GM18951 (cell line): ENCODE measurements at regions of chr1 and their contacts with region 1.

Region 1: GRCh38 chr1:63691701-63692425 is 82.0 kb upstream of the ROR1 start:
- POLR2A ChIP-seq: no peak

Region 2: DNA sequence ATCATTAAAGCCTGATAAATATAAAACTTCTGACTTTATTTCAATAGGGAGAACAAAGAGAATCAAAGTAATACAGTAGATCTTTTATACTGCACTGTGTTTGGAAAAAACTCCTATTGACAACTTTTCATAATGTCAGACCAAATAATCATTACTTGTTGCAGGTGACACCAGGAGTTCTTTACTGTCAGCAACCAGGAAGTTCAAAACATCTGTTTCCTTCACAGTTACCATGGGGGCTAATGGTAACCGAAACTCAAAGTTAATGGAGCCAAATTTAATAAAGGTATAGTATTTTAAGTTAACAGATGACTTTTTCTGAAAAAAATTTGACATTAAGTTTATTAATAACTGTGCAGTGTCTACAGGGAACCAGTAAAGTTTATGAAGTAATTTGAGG is 157.9 kb before region 1 on chr1:
- in situ Hi-C with region 1: no loop called
- POLR2A ChIP-seq: no peak

Region 3: DNA sequence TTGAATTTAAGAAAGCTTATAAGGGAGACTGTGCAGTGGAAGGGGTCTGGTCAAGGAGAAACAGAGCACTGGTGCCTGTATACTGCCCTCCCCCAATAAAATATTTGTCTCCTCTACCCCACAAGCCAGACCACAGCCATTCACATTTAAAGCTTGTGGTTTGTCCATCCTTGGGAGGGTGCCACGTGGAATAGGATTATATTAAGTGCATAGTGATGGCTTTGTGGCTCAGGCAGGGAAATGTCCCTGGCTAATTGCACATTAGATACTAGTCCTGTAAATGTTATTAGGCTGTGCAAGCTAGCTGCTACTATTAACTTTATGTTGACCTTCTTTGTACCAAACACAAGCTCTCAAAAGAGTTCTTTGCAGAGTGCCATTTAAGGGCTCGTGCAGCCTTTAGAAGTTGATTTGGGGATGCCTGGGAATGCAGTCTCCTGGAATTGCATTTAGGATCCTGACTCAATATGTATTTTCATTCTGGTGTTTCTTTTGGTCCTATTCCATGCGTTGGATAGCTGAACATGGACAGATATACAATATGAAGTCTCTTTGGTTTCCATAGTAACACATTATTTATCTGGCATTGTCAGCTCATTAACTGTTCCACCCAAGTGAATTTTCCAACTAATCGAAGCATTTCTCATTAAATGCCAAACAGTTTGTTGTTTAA is 292.5 kb after region 1 on chr1:
- in situ Hi-C with region 1: no loop called
- POLR2A ChIP-seq: no peak

Region 4: GRCh38 chr1:64136752-64137411 is 445.0 kb after region 1 on chr1:
- in situ Hi-C with region 1: loop called (anchors 25 kb)
- POLR2A ChIP-seq: no peak

Region 5: DNA sequence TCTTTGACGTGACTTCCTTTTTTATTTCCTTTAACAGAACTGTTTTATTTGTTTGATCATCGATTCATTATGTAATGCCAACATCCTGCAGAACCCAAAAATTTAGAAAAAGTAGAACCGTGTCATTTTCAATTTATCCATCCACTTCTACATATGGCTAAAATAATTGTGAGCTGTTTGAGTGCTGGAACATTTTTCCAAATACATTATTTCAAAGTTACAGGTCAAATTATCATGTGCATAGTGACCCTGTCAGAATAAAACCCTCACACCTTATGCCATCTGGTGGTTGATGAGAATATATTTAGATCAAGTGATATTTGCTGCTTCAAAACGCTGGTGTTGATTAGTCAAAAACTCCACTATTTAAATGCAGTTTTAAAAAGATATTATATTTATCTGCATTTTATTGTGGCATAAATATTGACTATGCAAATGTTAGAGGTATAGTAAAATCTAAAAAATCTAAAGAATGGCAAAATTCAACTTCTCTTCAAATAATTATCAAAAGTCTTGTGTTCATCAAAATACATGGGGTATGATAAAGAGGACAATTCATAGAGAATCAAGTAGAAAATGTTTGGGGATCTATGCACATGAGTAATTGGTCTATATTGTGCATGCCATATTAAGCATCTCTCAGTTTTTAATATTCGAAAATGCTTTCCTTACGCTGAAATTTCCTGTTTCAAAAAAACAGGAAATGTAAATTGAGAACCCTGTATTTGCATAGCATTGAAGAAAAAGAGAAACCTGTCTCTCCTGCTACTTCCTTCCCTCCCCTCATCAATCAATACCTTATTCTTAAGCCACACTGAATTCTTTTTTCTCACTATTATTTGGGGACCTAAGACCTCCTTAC is 551.3 kb after region 1 on chr1:
- in situ Hi-C with region 1: loop called (anchors 25 kb)
- POLR2A ChIP-seq: no peak

Region 6: DNA sequence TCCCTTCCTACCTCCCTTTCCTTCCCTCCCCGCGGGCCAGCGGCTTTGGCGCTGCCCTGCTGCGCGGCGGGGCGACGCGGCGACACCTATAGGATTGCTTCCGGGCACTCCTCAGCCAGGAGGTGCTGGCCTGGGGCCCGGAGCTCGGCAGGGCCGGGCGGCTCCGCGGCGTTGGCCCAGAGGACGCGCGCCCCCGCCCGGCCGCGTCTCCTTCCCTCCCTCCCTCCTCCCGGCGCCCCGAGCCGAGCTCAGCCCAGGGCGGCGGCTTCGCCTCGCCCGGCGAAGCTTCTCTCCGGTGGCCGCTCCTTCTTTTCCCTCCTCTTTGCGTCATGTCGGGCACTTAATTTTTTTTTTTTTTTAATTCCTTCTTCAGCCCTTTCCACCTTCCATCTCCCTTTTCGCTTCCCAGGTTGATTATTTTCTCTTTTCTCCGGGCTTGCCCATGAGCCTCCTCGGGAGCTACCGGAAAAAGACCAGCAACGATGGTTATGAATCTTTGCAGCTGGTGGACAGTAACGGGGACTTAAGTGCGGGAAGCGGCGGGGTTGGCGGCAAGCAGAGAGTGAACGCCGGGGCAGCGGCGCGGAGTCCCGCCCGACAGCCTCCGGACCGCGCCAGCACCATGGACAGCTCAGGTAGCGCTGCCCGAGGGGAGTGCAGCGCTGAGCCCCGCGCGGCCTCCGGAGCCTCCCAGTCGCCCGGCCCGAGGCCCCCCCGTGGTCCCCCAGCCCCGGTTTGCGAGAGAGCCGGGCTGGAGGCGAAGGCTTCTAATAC is 1617.6 kb after region 1 on chr1 and contains the start of gene DNAJC6:
- in situ Hi-C with region 1: no loop called
- POLR2A ChIP-seq: no peak